ENCODE measurements at regions of chr10 and their contacts with region 1.

Region 1: DNA sequence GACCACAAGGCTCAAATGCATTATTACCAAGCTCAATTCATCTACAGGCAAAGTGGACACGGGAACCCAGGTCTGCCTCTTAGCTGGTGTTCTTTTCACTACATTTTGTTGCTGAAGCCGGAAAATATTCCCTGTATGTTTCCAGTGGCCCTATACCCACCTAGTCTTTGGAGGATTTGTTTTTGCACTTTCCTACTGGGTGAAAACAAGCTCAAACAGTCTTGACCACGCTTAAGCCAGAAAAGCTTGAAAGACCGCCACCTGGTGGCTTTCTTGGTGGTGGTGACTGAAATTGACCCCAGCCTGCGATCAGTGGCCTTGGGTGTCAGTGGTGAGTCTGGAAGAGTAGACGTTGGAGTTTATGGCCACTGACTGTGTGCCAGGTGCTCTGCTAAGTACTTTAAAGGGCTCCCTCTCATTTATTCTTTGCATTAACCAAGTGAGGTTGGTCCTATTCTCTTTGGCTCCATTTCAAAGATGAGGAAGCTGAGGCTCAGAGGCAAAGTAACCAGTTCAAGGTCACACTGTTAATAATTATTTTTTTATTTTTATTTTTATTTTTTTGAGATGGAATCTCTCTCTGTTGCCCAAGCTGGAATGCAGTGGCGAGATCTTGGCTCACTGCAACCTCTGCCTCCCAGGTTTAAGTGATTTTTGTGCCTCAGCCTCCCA is 11.1 kb upstream of the CRTAC1 start:
- DNase-seq: peak; percentile 21 to 57
- ATAC-seq: peak in 1 of 3 donors; percentile 42
- H3K4me3 ChIP-seq: no peak overlapping the region
- H3K4me3 Mint-ChIP-seq: no peak overlapping the region
- H3K27ac ChIP-seq: no peak overlapping the region
- H3K27ac Mint-ChIP-seq: no peak overlapping the region
- H3K4me1 ChIP-seq: no peaks in the 10 kb centered on the region
- H3K4me1 Mint-ChIP-seq: peaks cover 6 to 7% of the 10 kb centered on the region in 2 donors
- H3K27me3 ChIP-seq: peaks cover 12% of the 10 kb centered on the region
- H3K27me3 Mint-ChIP-seq: peaks cover 39 to 64% of the 10 kb centered on the region in 2 donors
- CTCF ChIP-seq: peak; percentile 53

Region 2: GRCh38 chr10:97701438-97702069 is 340.0 kb before region 1 on chr10:
- intact Hi-C with region 1: loop called (anchors 5 kb)
- DNase-seq: peak in 1 of 2 donors; percentile 81
- ATAC-seq: peak; percentile 88 to 97 (median 97)
- H3K4me3 ChIP-seq: no peak overlapping the region
- H3K4me3 Mint-ChIP-seq: no peak overlapping the region
- H3K27ac ChIP-seq: no peak overlapping the region
- H3K27ac Mint-ChIP-seq: no peak overlapping the region
- H3K4me1 ChIP-seq: peaks cover 3% of the 10 kb centered on the region
- H3K4me1 Mint-ChIP-seq: peaks cover 6 to 7% of the 10 kb centered on the region in 2 donors
- H3K27me3 ChIP-seq: no peaks in the 10 kb centered on the region
- H3K27me3 Mint-ChIP-seq: peaks cover 0 to 5% of the 10 kb centered on the region in 2 donors
- CTCF ChIP-seq: peak; percentile 73

Region 3: DNA sequence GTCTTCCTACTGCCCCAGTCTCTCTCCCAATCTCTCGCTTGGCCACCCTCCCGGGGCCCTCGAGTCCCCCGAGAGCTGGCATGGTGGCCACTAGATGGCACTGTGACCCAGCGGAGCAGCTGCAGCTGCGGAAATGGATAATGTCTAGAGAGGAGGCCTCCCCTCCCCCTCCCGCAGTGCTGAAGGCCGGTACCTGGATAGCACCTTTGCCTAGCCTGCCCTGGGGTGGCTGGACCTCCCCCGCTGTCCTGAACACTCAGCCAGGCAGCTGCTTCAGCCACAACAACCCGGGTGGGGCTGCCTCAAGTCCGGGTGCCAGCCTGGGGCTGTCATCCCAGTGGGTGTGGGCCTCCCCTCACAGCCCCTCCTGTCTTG is 126.7 kb before region 1 on chr10:
- intact Hi-C with region 1: loop called (anchors 2 kb)
- DNase-seq: peak; percentile 62 to 83
- ATAC-seq: peak; percentile 75 to 94 (median 82)
- H3K4me3 ChIP-seq: no peak overlapping the region
- H3K4me3 Mint-ChIP-seq: no peak overlapping the region
- H3K27ac ChIP-seq: no peak overlapping the region
- H3K27ac Mint-ChIP-seq: no peak overlapping the region
- H3K4me1 ChIP-seq: peaks cover 8% of the 10 kb centered on the region
- H3K4me1 Mint-ChIP-seq: peaks cover 6 to 10% of the 10 kb centered on the region in 2 donors
- H3K27me3 ChIP-seq: no peaks in the 10 kb centered on the region
- H3K27me3 Mint-ChIP-seq: peaks cover 17 to 36% of the 10 kb centered on the region in 2 donors
- CTCF ChIP-seq: peak; percentile 95

Region 4: GRCh38 chr10:98062424-98062823 is 20.9 kb after region 1 on chr10:
- intact Hi-C with region 1: no loop called
- DNase-seq: no peak
- ATAC-seq: no peak
- H3K4me3 ChIP-seq: no peak overlapping the region
- H3K4me3 Mint-ChIP-seq: no peak overlapping the region
- H3K27ac ChIP-seq: no peak overlapping the region
- H3K27ac Mint-ChIP-seq: no peak overlapping the region
- H3K4me1 ChIP-seq: no peaks in the 10 kb centered on the region
- H3K4me1 Mint-ChIP-seq: no peaks in the 10 kb centered on the region
- H3K27me3 ChIP-seq: peaks cover 6% of the 10 kb centered on the region
- H3K27me3 Mint-ChIP-seq: peaks cover 34 to 59% of the 10 kb centered on the region in 2 donors
- CTCF ChIP-seq: no peak